ENCODE measurements at regions of chr2 and their contacts with region 1.

Region 1: DNA sequence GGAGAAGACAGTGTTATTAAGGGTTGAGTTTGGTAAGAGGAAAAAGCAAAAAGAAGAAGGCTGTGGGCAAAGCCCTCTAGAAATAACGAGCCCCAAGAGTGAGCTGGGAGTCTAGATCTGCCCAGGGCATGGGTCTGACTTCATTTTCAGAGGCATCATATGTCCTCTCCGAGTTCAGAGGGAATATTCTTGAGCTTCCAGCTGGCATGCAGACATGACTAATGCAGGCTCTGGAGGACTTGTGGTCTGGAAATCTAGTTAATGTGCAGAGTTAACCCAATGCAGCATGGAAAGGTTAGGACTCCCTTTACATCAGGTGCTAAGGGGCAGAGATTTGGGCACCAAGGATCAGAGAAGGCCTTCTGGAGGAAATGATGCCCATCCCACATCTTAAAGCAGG is 7.3 kb downstream of the ACMSD start:
- DNase-seq: no peak
- ATAC-seq: no peak
- H3K4me3 ChIP-seq: no peak overlapping the region
- H3K27ac ChIP-seq: no peak overlapping the region
- H3K4me1 ChIP-seq: no peaks in the 10 kb centered on the region
- H3K27me3 ChIP-seq: no peaks in the 10 kb centered on the region
- CTCF ChIP-seq: no peak
- POLR2A ChIP-seq: no peak

Region 2: DNA sequence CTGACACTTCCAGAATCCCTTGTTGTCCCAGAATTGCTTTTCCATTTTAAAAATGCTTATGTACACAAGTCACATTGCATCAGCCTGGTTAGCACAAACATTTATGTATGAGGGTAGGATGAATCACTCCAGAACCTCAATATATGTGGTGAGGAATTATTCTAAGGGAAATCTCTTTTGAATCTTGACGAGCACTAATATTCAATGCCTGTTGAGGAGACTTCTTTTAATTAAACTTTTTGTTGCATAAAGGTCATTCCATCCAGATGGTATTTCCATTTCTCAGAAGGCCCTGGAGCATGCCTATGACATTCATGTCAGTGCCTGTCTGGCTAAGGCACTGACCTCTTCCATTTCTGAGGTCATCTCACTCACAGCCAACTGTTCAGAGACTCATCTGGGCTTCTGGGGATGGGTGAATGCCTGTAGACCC is 20.8 kb after region 1 on chr2:
- intact Hi-C with region 1: no loop called
- DNase-seq: no peak
- ATAC-seq: peak in 1 of 4 donors; percentile 33
- H3K4me3 ChIP-seq: no peak overlapping the region
- H3K27ac ChIP-seq: no peak overlapping the region
- H3K4me1 ChIP-seq: no peaks in the 10 kb centered on the region
- H3K27me3 ChIP-seq: no peaks in the 10 kb centered on the region
- CTCF ChIP-seq: no peak
- POLR2A ChIP-seq: no peak

Region 3: DNA sequence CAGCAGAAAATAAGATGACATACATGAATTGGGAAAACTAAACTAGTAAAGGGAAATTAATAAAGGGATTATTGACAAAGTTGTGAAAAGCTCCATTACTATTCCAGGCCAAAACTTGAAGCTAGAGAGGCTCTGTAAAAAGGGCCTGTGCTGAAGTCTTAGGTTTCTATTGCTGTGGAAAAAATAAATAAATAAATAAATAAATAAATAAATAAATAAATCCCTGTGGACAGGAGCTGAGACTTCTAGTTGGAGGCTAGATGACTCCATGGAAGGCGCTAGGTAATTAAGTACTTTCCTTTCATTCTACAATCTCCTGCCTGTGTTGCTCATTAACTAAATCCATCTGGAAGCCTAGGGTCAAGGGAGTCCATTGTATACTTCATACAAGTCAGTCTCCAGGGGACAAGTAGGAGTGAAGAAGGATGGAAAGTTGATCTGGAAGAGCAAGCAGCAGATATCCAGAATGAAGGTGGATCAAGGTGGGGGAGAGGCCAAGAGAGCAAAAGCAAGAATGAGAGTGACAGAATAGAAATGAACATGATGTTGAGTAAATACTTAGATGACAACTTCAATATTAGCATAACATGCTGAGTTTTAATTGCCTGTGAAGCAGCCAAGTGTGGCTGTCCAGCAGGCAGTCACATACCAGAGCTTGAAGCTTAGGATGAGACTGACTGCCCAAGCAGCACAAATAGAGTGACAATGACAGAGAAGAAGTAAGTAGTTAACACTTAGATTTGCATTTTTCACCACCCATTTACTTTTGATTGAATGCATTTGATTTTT is 46.8 kb after region 1 on chr2:
- intact Hi-C with region 1: loop called in 1 of 10 experiments (anchors 2 kb)
- DNase-seq: no peak
- ATAC-seq: no peak
- H3K4me3 ChIP-seq: no peak overlapping the region
- H3K27ac ChIP-seq: no peak overlapping the region
- H3K4me1 ChIP-seq: no peaks in the 10 kb centered on the region
- H3K27me3 ChIP-seq: no peaks in the 10 kb centered on the region
- CTCF ChIP-seq: no peak
- POLR2A ChIP-seq: no peak

Measured in heart left ventricle (tissue), 16 donors.